Activated naive CD4-positive, alpha-beta T cell treated with anti-CD3 and anti-CD28 coated beads, Interleukin-2, amount 10 ng/mL, durations not matched to agents 7 days and 5 days (primary cell): ENCODE measurements at regions of chr19 and their contacts with region 1.

Region 1: GRCh38 chr19:32224371-32225244 is 120.8 kb upstream of the ZNF507 start:
- DNase-seq: peak; percentile 63
- H3K4me3 Mint-ChIP-seq: no peak overlapping the region
- H3K27ac Mint-ChIP-seq: no peak overlapping the region
- H3K4me1 Mint-ChIP-seq: peaks cover 12% of the 10 kb centered on the region
- H3K27me3 Mint-ChIP-seq: peaks cover 38% of the 10 kb centered on the region

Region 2: GRCh38 chr19:30785458-30786137 is 1439.0 kb before region 1 on chr19:
- CTCF ChIA-PET with region 1: interaction called, 10 read pairs
- DNase-seq: no peak
- H3K4me3 Mint-ChIP-seq: no peak overlapping the region
- H3K27ac Mint-ChIP-seq: no peak overlapping the region
- H3K4me1 Mint-ChIP-seq: no peaks in the 10 kb centered on the region
- H3K27me3 Mint-ChIP-seq: no peaks in the 10 kb centered on the region

Region 3: DNA sequence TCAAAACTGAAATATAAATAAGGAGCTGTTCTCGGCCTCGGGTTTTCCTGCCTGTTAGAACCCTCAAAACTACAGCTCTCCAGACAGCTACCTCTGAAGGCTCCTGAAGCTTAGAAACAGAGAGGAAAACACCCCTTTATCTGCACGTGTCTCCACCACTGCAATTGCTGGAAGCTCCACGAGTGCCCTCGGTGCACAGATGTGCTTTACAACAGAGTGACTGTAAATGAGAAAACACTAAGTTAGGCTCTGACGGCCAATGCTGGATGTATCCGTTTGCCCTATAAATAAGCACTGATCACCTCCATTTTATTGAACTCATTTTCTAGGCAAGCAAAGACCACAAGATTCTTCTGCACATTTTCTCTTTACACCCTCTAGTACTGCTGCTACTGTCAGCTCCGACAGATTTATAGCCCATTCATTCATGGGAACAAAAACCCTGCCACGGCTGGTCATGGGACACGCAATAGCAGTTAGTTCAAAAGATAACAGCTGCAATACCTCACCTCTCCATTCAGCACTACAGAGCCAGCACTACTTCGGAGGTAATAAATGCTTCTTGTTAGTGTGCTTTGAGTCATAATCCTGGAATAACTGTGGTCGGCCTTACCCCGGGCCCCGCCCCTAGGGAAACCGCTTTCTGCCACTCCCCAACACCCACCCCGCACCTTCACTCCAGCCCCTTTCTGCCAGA is 120.3 kb before region 1 on chr19:
- CTCF ChIA-PET with region 1: no interaction called
- DNase-seq: no peak
- H3K4me3 Mint-ChIP-seq: no peak overlapping the region
- H3K27ac Mint-ChIP-seq: no peak overlapping the region
- H3K4me1 Mint-ChIP-seq: no peaks in the 10 kb centered on the region
- H3K27me3 Mint-ChIP-seq: peaks cover 13% of the 10 kb centered on the region